ENCODE measurements at regions of chr15 and their contacts with region 1.

Region 1: GRCh38 chr15:51853998-51854397 is 24.5 kb downstream of the TMOD3 start:
- DNase-seq: no peak
- CTCF ChIP-seq: no peak

Region 2: DNA sequence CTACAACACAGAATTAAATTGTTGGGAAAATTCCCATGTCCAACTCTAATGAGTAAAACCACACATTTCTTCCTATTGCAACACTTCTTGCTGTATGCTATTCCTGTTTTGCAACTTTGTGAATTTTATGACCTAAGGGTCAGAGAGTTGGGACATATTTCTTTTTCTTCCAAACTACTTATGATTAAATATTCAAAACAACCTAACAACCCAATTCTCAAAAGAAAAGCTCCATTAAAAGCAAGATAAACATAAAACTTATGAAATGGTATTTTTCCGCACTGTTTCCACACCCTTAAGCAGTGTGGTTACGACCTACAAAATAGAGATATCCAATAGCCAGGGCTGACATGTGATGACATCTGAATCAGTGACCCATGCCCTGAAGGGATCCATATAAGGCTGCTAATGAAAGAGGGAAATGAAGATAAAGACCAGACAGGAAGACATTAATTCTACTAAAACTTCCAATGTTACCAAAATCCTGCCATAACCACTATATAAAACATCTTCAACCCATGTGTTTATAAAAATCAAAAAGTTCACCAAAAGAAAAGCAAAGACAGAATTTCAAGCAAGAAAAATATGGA is 277.0 kb before region 1 on chr15:
- CTCF ChIA-PET with region 1: no interaction called
- POLR2A ChIA-PET with region 1: no interaction called
- DNase-seq: no peak
- CTCF ChIP-seq: no peak

Region 3: GRCh38 chr15:51842852-51843737 is 10.9 kb before region 1 on chr15:
- CTCF ChIA-PET with region 1: interaction called, 26 read pairs
- POLR2A ChIA-PET with region 1: no interaction called
- DNase-seq: peak; percentile 23
- CTCF ChIP-seq: no peak

Region 4: DNA sequence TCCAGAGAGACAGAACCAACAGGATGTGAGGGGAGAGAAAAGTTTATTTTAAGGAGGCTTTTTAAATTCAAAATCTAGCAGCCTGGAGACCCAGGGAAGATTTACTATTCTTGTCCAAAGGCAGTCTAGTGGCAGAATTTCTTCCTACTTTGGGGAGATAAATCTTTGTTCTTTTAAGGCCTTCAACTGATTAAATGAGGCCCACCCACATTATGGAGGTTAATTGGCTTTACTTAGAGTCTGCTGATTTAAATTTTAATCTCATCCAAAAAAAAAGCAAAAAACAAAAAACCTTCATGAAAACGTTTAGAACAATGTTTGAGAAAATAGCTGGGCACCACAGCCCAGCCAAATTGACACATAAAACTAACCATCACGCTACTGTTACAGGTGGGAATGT is 16.8 kb after region 1 on chr15:
- CTCF ChIA-PET with region 1: interaction called, 10 read pairs
- POLR2A ChIA-PET with region 1: no interaction called
- DNase-seq: no peak
- CTCF ChIP-seq: no peak